Activated CD4-positive, alpha-beta T cell treated with anti-CD3 and anti-CD28 coated beads, Interleukin-2, amount 10 ng/mL, durations not matched to agents 24 days and 14 days (primary cell): ENCODE measurements at regions of chr1 and their contacts with region 1.

Region 1: DNA sequence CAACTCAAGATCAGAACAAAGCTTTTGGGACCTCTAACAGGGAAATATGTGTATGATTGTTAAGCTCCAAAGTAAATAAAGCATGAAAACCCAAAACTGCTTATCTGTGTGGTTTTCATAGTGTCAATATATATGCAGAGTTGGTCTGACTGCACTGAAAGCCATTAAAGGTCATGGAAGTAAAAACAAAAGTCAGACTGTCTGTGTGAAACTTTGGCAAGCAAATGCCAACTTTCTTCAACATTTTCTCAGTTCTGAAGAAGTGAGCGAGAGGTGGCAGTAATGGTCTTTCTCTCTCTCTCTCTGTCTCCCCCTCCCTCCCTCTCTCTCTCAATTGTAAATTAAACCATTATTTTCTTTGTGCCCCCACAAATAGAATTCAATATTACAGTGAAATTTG is 100.1 kb upstream of the S1PR1 start:
- DNase-seq: peak; percentile 79
- H3K4me3 Mint-ChIP-seq: peak overlapping the region; percentile 67
- H3K27ac Mint-ChIP-seq: peak overlapping the region; percentile 80
- H3K4me1 Mint-ChIP-seq: peaks cover 65% of the 10 kb centered on the region
- H3K27me3 Mint-ChIP-seq: peaks cover 1% of the 10 kb centered on the region

Region 2: DNA sequence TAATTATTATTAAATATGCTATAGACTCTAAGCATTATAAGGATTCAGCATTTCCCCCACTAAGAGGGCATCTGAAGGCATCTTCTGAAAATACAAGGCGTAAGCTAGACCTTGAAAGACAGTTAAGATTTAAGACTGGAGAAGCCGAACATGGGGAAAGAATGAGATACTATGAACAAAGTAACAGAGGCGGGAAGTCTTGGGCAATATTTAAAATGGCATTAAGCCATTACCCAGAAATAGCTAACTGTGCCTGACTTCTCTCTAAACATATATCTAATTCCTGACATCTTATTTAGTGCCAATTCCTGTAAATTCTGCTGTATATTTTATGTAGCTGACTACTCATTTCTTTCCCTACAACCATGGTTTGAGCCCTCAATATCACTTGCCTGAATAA is 132.1 kb before region 1 on chr1:
- intact Hi-C with region 1: loop called (anchors 5 kb)
- DNase-seq: no peak
- H3K4me3 Mint-ChIP-seq: no peak overlapping the region
- H3K27ac Mint-ChIP-seq: no peak overlapping the region
- H3K4me1 Mint-ChIP-seq: peaks cover 33% of the 10 kb centered on the region
- H3K27me3 Mint-ChIP-seq: no peaks in the 10 kb centered on the region

Region 3: GRCh38 chr1:101112051-101112780 is 24.5 kb before region 1 on chr1:
- intact Hi-C with region 1: loop called (anchors 1 kb)
- DNase-seq: peak; percentile 90
- H3K4me3 Mint-ChIP-seq: peak overlapping the region; percentile 58
- H3K27ac Mint-ChIP-seq: peak overlapping the region; percentile 91
- H3K4me1 Mint-ChIP-seq: peaks cover 53% of the 10 kb centered on the region
- H3K27me3 Mint-ChIP-seq: no peaks in the 10 kb centered on the region

Region 4: DNA sequence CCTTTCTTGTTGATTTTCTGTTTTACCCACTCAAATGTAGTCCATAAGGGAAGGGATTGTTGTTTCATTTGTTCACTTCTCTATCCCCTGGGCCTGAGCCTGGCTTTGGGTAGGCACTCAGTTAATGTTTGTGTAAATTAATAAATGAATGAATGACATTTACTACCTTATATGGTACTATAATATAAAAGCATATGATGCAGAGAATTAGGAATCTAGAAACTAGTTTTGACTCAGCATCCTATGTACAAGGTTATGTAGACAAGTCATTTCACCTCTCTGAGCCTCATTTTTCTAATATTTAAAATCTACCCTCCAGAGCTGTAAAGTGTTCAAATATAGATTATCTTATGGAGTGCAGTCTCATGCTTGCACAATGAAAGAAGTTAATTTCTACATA is 31.2 kb after region 1 on chr1:
- intact Hi-C with region 1: loop called (anchors 2 kb)
- DNase-seq: no peak
- H3K4me3 Mint-ChIP-seq: no peak overlapping the region
- H3K27ac Mint-ChIP-seq: no peak overlapping the region
- H3K4me1 Mint-ChIP-seq: peaks cover 19% of the 10 kb centered on the region
- H3K27me3 Mint-ChIP-seq: no peaks in the 10 kb centered on the region